Activated B cell treated with CpG ODN at 0.5 μM for 24 hours (primary cell): ENCODE measurements at regions of chrX and their contacts with region 1.

Region 1: GRCh38 chrX:78321809-78322208 is 5.6 kb downstream of the CYSLTR1 start:
- DNase-seq: peak; percentile 24
- ATAC-seq: peak; percentile 93
- H3K4me3 Mint-ChIP-seq: peak overlapping the region; percentile 41
- H3K27ac Mint-ChIP-seq: peak overlapping the region; percentile 77
- H3K4me1 Mint-ChIP-seq: peaks cover 61% of the 10 kb centered on the region
- H3K27me3 Mint-ChIP-seq: no peaks in the 10 kb centered on the region
- CTCF ChIP-seq: no peak

Region 2: DNA sequence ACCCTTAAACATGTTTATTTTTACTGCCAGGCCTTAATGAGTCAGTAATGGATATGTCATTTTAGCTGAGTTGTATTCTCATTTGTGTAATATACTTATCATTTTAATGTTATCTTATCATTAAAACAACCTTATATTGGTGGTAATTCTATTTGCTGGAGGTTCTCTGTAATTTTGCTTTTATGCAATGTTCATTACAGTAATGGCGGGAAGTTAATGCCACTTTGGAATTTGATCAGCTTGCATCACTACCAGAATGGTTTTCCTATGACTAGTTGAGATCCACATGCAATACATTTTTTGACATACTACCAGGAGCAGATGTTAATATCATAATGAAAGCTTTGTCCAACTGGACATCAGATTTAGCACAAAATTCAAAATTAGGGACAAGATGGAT is 346.0 kb before region 1 on chrX:
- CTCF ChIA-PET with region 1: no interaction called
- POLR2A ChIA-PET with region 1: no interaction called
- intact Hi-C with region 1: no loop called
- DNase-seq: no peak
- ATAC-seq: no peak
- H3K4me3 Mint-ChIP-seq: no peak overlapping the region
- H3K27ac Mint-ChIP-seq: no peak overlapping the region
- H3K4me1 Mint-ChIP-seq: no peaks in the 10 kb centered on the region
- H3K27me3 Mint-ChIP-seq: no peaks in the 10 kb centered on the region
- CTCF ChIP-seq: no peak

Region 3: GRCh38 chrX:78103623-78104446 is 218.0 kb before region 1 on chrX and contains the start of gene PGK1:
- CTCF ChIA-PET with region 1: no interaction called
- POLR2A ChIA-PET with region 1: no interaction called
- intact Hi-C with region 1: loop called (anchors 10 kb)
- DNase-seq: peak; percentile 81
- ATAC-seq: peak; percentile 95
- H3K4me3 Mint-ChIP-seq: peak within 1 kb of the TSS; percentile 87
- H3K27ac Mint-ChIP-seq: peak within 1 kb of the TSS; percentile 90
- H3K4me1 Mint-ChIP-seq: peaks cover 41% of the 10 kb centered on the region
- H3K27me3 Mint-ChIP-seq: peaks cover 2% of the 10 kb centered on the region
- CTCF ChIP-seq: no peak
- total RNA-seq, gene PGK1: 293 and 295 TPM in 2 replicates